BJ (cell line): ENCODE measurements at regions of chr2 and their contacts with region 1.

Region 1: DNA sequence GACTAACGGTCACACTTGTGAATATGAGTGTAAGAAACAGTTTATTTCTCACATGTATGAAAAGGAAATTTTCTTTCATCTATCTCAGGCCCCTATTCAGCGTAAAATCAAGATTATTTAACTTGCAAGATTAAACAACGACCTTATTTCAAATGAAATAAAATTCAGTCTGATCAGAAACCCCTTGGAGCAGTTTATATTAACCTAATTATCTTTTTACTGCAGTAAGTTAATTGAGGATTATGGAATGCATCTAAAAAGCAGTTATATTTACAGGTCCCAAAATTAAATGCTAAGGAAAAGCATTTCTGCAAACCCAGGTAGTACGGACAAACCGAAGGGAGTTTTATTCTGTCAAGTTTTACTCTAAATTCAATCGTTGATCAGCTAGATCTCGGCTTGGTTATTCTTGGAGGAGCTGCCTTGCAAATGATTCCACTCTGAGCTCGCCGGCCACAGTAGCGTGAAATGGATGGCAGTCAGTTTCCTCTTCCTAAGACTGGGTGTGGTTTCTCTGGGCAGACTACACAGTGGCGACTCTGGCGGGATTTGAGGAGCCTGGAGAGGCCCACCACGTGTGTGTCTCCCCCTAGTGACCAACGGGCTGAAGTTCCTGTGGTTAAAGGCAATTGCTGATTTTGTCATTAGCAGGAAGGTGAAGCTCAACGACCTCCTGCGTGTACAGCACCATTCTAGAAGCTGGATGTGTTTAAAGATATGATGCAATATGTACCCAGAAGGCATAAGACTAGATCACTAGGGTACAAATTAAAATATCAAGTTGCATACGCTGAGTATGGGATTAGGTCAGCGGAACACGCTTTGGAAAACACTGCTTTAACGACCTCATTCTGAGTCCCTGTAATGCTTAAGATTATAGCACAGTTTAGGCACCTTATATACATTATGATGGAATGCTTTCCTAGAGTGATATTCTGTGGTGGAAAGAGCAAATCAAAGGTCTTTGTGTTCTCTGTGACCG is 36.4 kb downstream of the PRKRA start:
- DNase-seq: peak; percentile 80
- H3K4me3 ChIP-seq: peak overlapping the region; percentile 62
- H3K27me3 ChIP-seq: no peaks in the 10 kb centered on the region
- CTCF ChIP-seq: peak; percentile 95

Region 2: DNA sequence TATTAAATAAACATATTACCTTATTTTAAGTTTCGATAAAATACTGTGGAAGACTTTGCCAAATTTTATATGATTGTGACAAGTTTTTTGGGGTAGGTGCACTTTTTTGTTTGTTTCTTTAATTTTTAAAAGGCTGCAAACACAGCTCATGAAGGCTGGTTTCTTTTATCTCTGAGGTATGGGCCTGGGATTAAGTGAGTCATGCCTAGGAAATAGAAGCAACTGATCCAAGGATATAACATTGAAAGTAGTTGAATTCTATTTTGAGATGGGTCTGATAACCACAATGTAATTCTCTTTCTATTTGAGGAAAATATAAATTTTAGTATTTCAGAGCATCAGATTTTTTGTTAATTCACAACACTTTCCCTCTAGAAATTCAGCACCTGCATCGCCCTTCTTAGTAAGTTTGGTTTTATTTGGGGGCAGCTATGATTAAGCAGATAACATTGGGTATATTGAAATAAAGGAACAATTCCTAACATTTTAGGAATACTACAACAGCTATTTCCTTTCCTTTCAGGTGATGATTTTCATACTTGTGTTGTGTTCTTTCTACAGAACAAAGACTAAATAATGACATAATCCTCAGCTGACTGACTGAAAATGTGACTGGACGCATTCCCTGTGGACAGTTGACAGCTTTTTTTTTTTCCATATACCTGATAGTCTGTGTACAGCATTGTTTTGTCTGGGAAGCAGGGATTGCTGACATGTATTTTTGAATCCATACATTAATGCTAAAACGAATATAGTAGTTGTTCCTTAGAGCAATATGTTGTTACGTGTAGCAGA is 285.5 kb before region 1 on chr2:
- CTCF ChIA-PET with region 1: interaction called, 18 read pairs
- POLR2A ChIA-PET with region 1: no interaction called
- DNase-seq: no peak
- H3K4me3 ChIP-seq: no peak overlapping the region
- H3K27me3 ChIP-seq: no peaks in the 10 kb centered on the region
- CTCF ChIP-seq: no peak

Region 3: DNA sequence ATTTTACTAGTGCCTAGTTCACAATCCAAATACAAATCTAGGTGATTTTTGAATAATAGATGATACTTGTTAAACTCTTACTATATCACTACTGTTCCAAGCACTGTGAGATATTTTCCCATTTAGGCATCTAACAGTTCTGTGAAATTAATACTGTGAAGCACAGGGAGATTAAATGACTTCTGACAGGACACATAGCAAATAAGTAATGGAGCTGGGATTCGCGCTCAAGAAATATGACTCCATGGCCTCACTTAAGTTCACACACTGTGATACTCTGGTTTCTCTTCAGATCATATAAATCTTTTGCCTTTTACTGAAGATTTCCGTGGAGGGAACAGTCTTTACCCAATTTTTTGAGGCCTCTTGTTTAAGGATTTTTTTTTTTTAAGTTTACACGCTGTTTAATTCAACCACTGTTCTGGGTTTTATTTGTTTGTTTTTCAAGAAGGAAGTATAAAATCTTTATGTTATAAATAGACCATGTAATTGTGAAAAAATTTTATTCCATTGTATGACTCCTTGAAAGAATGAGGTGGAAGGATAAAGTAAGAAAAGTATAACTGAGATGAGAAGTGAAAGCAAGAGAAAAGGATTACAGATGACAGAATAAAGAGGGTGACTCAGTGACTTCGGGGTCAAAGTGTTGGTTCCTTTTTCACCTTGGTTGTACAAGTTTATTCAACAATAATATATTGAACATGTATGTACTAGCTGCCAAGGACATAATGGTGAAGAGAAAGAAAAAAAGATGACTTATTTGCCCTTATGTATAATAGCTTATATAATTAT is 272.1 kb before region 1 on chr2:
- CTCF ChIA-PET with region 1: interaction called, 15 read pairs
- POLR2A ChIA-PET with region 1: no interaction called
- DNase-seq: no peak
- H3K4me3 ChIP-seq: no peak overlapping the region
- H3K27me3 ChIP-seq: no peaks in the 10 kb centered on the region
- CTCF ChIP-seq: no peak

Region 4: GRCh38 chr2:178306352-178307073 is 108.0 kb before region 1 on chr2:
- CTCF ChIA-PET with region 1: interaction called, 15 read pairs
- POLR2A ChIA-PET with region 1: no interaction called
- DNase-seq: no peak
- H3K4me3 ChIP-seq: no peak overlapping the region
- H3K27me3 ChIP-seq: no peaks in the 10 kb centered on the region
- CTCF ChIP-seq: peak; percentile 71

Region 5: DNA sequence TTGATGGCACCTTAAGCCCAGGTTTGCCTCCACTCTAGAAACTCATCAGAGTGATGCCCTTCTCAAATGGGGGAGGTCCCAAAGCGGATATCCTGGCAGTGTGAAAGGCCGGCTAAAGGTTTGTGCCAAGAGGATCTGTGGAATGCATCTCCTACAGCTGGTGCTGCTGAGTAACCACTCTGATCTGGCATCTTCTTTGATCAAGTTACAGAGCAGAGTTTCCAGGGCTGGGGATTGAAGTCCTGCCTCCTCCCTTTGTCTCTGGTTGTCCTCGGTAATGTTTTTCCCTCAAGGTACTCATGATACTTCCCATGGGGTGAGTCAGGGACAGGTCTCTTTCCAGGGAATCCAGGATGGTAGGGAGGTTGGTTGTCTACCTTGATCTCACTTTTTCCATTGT is 11.8 kb after region 1 on chr2:
- CTCF ChIA-PET with region 1: interaction called, 16 read pairs
- POLR2A ChIA-PET with region 1: no interaction called
- DNase-seq: no peak
- H3K4me3 ChIP-seq: no peak overlapping the region
- H3K27me3 ChIP-seq: no peaks in the 10 kb centered on the region
- CTCF ChIP-seq: no peak

Region 6: GRCh38 chr2:178478439-178479274 is 64.1 kb after region 1 on chr2 and contains the start of gene FKBP7:
- CTCF ChIA-PET with region 1: no interaction called
- POLR2A ChIA-PET with region 1: no interaction called
- DNase-seq: no peak
- H3K4me3 ChIP-seq: peak within 1 kb of the TSS; percentile 50
- H3K27me3 ChIP-seq: no peaks in the 10 kb centered on the region
- CTCF ChIP-seq: peak; percentile 78
- polyA plus RNA-seq, gene FKBP7: 32.4 and 59.2 TPM in 2 replicates

Region 7: GRCh38 chr2:178491612-178492011 is 77.1 kb after region 1 on chr2:
- CTCF ChIA-PET with region 1: no interaction called
- POLR2A ChIA-PET with region 1: no interaction called
- DNase-seq: no peak
- H3K4me3 ChIP-seq: no peak overlapping the region
- H3K27me3 ChIP-seq: no peaks in the 10 kb centered on the region
- CTCF ChIP-seq: no peak

Region 8: DNA sequence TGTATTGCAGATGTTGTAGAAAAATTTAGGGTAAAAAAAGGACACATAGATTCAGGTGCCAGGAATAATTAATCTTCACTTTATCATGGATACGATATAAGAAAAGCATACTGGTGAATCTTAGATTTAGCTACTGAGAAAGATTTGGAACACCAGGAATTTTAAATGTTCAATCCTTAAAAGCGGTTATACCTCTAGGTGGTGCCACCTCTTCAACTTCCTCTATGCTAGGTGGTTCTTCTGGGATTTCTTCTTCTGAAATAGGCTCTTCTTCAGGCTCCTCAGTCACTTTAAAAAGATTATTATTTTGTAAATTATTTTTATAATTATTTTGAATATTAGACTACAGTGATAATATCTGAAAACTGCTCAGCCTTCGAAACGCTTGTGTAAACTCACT is 259.6 kb after region 1 on chr2:
- CTCF ChIA-PET with region 1: no interaction called
- POLR2A ChIA-PET with region 1: no interaction called
- DNase-seq: no peak
- H3K4me3 ChIP-seq: no peak overlapping the region
- H3K27me3 ChIP-seq: no peaks in the 10 kb centered on the region
- CTCF ChIP-seq: 0 out of 2 replicates have a peak, but pooled peaks have one; percentile 4